GM12878 (cell line): ENCODE measurements at regions of chr20 and their contacts with region 1.

Region 1: GRCh38 chr20:31856516-31856915 is 11.1 kb upstream of the FOXS1 start:
- DNase-seq: no peak
- ATAC-seq: no peak
- H3K4me3 ChIP-seq: no peak overlapping the region
- H3K27ac ChIP-seq: no peak overlapping the region
- H3K4me1 ChIP-seq: peaks cover 10% of the 10 kb centered on the region
- H3K27me3 ChIP-seq: peaks cover 0 to 6% of the 10 kb centered on the region in 2 experiments; a peak in 1 of 4 replicates
- CTCF ChIP-seq: no peak
- EP300 ChIP-seq: no peak
- POLR2A ChIP-seq: no peak
- RAD21 ChIP-seq: no peak

Region 2: GRCh38 chr20:31822421-31823330 is 33.8 kb before region 1 on chr20:
- CTCF ChIA-PET with region 1: interaction called, 17 read pairs
- POLR2A ChIA-PET with region 1: no interaction called
- RAD21 ChIA-PET with region 1: interaction called, 3 read pairs
- SMC1A ChIA-PET with region 1: interaction called, 4 read pairs
- in situ Hi-C with region 1: no loop called
- intact Hi-C with region 1: no loop called
- DNase-seq: no peak
- ATAC-seq: peak; percentile 97
- H3K4me3 ChIP-seq: no peak overlapping the region
- H3K27ac ChIP-seq: no peak overlapping the region
- H3K4me1 ChIP-seq: no peaks in the 10 kb centered on the region
- H3K27me3 ChIP-seq: no peaks in the 10 kb centered on the region
- CTCF ChIP-seq: peak; percentile 96 to 98 (median 98); a peak in 5 of 6 replicates
- EP300 ChIP-seq: no peak
- POLR2A ChIP-seq: no peak
- RAD21 ChIP-seq: peak; percentile 86

Region 3: GRCh38 chr20:31869942-31870725 is 13.6 kb after region 1 on chr20 and contains the starts of genes DUSP15 and TTLL9:
- CTCF ChIA-PET with region 1: interaction called, 22 read pairs
- POLR2A ChIA-PET with region 1: interaction called, 6 read pairs
- RAD21 ChIA-PET with region 1: interaction called, 9 read pairs
- SMC1A ChIA-PET with region 1: interaction called, 11 read pairs
- in situ Hi-C with region 1: no loop called
- intact Hi-C with region 1: no loop called
- DNase-seq: no peak
- ATAC-seq: peak; percentile 65
- H3K4me3 ChIP-seq: peak within 1 kb of the TSS; percentile 41; the same call in 1 of the 2 replicates
- H3K27ac ChIP-seq: no peak within 1 kb of the TSS
- H3K4me1 ChIP-seq: peaks cover 13% of the 10 kb centered on the region
- H3K27me3 ChIP-seq: peaks cover 6 to 13% of the 10 kb centered on the region in 2 experiments
- CTCF ChIP-seq: no peak
- EP300 ChIP-seq: no peak
- POLR2A ChIP-seq: peak; percentile 25; the same call in 1 of the 2 replicates
- RAD21 ChIP-seq: no peak
- polyA plus RNA-seq, gene DUSP15: 0.06 TPM in 1 of 2 experiments, not detected in the other
- polyA plus RNA-seq, gene TTLL9: 0.03 TPM in 1 of 2 experiments, not detected in the other

Region 4: DNA sequence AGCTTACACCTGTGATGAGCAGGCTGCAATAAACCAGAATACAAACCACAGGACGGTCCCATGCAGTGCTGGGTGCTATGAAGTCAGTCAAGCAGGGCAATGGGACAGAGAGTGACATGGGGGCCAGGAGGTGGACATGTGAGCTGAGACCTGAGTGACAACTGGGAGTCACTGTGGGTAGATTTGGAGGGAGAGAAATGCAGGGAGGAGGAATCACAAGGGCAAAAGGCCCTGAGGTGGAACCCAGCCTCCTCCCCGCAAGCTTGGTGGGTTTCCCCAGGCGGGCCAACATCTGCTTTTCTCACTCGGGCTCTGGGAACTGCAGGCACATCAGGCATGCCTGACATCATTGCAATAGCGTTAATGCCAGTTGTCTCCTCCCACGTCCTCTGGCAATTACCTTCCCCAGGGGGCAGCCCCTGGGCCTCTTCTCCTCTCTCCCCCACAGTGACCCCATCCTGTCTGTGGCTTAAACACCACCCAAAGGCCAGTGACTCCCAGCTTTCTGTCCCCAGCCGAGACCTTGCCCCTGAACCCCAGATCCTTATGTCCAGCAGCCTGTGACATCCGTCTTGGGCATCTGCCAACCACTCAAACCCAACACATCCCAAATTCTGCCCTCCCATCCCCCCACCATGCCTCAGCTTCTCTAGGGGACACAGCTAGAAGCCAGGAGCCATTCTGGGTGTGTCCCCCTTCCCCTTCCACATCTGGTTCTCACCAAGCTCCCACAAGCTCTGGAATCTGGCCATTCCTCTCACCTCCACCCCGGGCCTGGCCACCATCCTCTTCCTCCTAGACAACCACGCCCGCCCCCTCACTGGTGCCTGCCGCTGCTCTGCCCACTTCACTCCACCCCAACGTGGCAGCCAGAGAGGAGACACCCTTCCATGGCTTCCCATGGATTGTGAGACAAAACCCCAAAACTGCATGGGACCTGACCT is 67.1 kb after region 1 on chr20:
- CTCF ChIA-PET with region 1: interaction called, 21 read pairs
- POLR2A ChIA-PET with region 1: interaction called, 3 read pairs
- RAD21 ChIA-PET with region 1: interaction called, 7 read pairs
- SMC1A ChIA-PET with region 1: interaction called, 19 read pairs
- in situ Hi-C with region 1: no loop called
- intact Hi-C with region 1: no loop called
- DNase-seq: peak; percentile 47
- ATAC-seq: peak; percentile 92
- H3K4me3 ChIP-seq: no peak overlapping the region
- H3K27ac ChIP-seq: no peak overlapping the region
- H3K4me1 ChIP-seq: peaks cover 11% of the 10 kb centered on the region
- H3K27me3 ChIP-seq: no peaks in the 10 kb centered on the region
- CTCF ChIP-seq: 0 out of 6 replicates have a peak, but pooled peaks of 1 of the 3 experiments have one; percentile 4
- EP300 ChIP-seq: peak in 1 of 2 experiments; percentile 72; a peak in 2 of 4 replicates
- POLR2A ChIP-seq: no peak
- RAD21 ChIP-seq: no peak

Region 5: DNA sequence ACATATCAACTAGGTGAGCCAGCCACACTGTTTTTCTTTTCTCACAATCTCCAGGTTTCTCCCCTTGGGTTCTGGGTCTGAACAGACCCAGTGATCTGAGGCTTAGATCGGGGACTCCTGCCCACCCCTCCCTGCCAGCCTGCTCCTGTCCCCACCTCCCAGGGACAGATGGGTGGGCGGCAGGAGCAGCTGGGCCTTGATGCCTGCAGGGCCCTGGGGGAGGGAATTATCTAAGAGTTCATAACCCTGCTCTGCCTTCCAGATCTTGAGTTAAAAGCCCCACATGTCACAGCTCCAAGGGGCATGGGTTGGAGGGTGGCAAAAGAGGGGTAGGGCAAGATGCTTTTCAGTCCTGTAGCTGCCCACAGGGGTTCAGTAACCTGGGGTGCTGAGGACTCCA is 106.2 kb after region 1 on chr20:
- CTCF ChIA-PET with region 1: interaction called, 41 read pairs
- POLR2A ChIA-PET with region 1: no interaction called
- RAD21 ChIA-PET with region 1: interaction called, 248 read pairs
- SMC1A ChIA-PET with region 1: interaction called, 8 read pairs
- in situ Hi-C with region 1: no loop called
- intact Hi-C with region 1: no loop called
- DNase-seq: no peak
- ATAC-seq: no peak
- H3K4me3 ChIP-seq: no peak overlapping the region
- H3K27ac ChIP-seq: no peak overlapping the region
- H3K4me1 ChIP-seq: no peaks in the 10 kb centered on the region
- H3K27me3 ChIP-seq: peaks cover 0 to 2% of the 10 kb centered on the region in 2 experiments; a peak in 3 of 4 replicates
- CTCF ChIP-seq: no peak
- EP300 ChIP-seq: no peak
- POLR2A ChIP-seq: no peak
- RAD21 ChIP-seq: no peak